CD8-positive, alpha-beta T cell (primary cell): ENCODE measurements at regions of chr5 and their contacts with region 1.

Region 1: DNA sequence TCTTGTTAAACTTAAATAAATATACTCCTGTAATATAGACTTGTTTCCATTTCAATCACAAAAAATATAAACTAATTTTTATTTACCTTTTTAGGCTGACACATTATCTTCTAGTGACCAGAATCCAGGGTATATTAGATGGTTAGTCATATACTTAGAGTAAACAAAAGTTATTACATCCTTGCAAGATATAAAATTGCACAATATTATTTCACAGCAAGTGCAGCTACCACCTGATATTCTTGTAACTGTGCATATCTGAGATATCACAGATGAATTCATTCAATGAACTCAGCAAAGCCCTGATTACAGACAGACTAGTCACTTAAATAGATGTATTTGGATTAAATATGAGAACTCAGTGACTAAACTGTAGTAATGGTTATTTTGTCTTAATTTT is 25.6 kb upstream of the ARRDC3 start:
- DNase-seq: no peak
- ATAC-seq: no peak
- H3K4me3 ChIP-seq: no peak overlapping the region
- H3K4me3 Mint-ChIP-seq: no peak overlapping the region
- H3K27ac ChIP-seq: no peak overlapping the region
- H3K27ac Mint-ChIP-seq: no peak overlapping the region
- H3K4me1 ChIP-seq: no peaks in the 10 kb centered on the region
- H3K4me1 Mint-ChIP-seq: no peaks in the 10 kb centered on the region
- H3K27me3 ChIP-seq: no peaks in the 10 kb centered on the region
- H3K27me3 Mint-ChIP-seq: no peaks in the 10 kb centered on the region
- CTCF ChIP-seq: no peak

Region 2: DNA sequence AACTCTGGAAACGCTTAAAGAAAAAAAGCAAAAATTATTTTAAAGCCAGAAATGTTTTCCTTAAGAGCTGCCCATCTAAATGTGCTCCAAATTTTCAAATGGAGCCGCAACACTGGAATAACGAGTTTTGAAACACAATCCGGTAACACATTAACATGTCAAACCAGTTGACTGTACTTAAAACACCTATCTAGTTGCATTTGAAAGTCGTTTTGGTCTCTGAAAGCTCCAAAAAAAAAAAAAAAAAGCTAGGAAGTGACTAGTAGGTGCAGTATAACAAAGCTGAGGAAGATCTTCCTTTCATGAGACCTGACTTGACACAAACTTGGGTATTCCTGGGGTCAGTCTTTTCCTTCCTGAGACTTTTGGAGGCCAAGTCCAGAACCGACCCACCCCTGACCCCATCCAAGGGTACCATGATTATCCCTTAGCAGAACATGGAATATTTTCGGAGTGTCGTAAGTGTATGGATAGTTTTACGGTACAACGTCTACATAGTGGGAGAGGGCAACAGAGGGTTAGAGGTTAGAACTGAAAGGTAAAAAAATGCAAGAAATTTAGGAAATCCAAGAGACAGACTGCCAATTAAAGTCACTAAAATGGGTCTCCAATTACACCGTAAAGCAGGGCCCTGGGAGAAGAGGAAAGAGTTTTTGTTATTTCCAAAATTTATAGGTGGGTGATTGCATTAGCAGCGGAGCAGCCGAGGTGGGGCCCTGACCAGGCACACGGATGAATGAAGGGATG is 1000.0 kb before region 1 on chr5:
- CTCF ChIA-PET with region 1: no interaction called
- POLR2A ChIA-PET with region 1: no interaction called
- intact Hi-C with region 1: no loop called
- DNase-seq: no peak
- ATAC-seq: no peak
- H3K4me3 ChIP-seq: peak overlapping the region; percentile 91 to 99
- H3K4me3 Mint-ChIP-seq: no peak overlapping the region
- H3K27ac ChIP-seq: peak overlapping the region; percentile 93 to 95
- H3K27ac Mint-ChIP-seq: no peak overlapping the region
- H3K4me1 ChIP-seq: peaks cover 7% of the 10 kb centered on the region
- H3K4me1 Mint-ChIP-seq: peaks cover 24% of the 10 kb centered on the region
- H3K27me3 ChIP-seq: no peaks in the 10 kb centered on the region
- H3K27me3 Mint-ChIP-seq: no peaks in the 10 kb centered on the region
- CTCF ChIP-seq: no peak

Region 3: DNA sequence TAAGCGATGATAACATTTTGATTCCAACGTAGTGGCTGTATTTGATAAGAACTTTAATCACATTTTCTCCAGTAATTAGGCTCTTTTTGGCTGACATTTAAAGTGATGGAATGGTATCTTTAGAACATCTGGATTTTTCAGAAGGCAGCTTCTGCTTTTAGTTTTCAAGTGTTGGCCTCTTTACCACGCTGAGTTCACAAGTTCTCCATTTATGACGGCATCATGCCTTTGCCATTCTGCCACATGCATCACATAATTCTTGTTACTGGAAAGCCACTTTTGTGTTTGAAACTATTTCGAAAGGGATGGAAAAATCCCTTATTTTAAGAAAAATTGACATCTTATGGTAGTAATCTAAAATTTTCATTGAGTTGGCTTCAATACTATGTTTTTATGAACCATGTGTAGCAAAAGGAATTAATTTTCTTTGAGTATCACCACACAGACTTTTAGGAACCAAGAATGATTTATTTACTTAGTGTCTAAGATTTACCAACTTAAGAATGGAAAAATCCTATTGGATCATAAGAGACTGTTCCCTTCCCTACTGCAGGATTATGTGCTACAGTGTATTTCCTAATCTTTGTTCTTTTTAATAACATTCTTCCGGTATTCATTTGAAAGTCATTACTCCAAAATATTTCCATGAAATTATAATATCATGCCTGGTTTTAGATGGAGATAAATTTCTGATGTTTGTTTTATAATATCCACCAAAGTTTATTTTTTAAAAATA is 505.9 kb before region 1 on chr5:
- CTCF ChIA-PET with region 1: no interaction called
- POLR2A ChIA-PET with region 1: no interaction called
- intact Hi-C with region 1: loop called in 1 of 2 experiments (anchors 1 kb)
- DNase-seq: no peak
- ATAC-seq: no peak
- H3K4me3 ChIP-seq: no peak overlapping the region
- H3K4me3 Mint-ChIP-seq: no peak overlapping the region
- H3K27ac ChIP-seq: no peak overlapping the region
- H3K27ac Mint-ChIP-seq: no peak overlapping the region
- H3K4me1 ChIP-seq: no peaks in the 10 kb centered on the region
- H3K4me1 Mint-ChIP-seq: no peaks in the 10 kb centered on the region
- H3K27me3 ChIP-seq: no peaks in the 10 kb centered on the region
- H3K27me3 Mint-ChIP-seq: no peaks in the 10 kb centered on the region
- CTCF ChIP-seq: no peak

Region 4: GRCh38 chr5:90949469-90950358 is 459.0 kb before region 1 on chr5:
- CTCF ChIA-PET with region 1: no interaction called
- POLR2A ChIA-PET with region 1: no interaction called
- intact Hi-C with region 1: loop called in 1 of 2 experiments (anchors 5 kb)
- DNase-seq: no peak
- ATAC-seq: no peak
- H3K4me3 ChIP-seq: no peak overlapping the region
- H3K4me3 Mint-ChIP-seq: no peak overlapping the region
- H3K27ac ChIP-seq: no peak overlapping the region
- H3K27ac Mint-ChIP-seq: no peak overlapping the region
- H3K4me1 ChIP-seq: no peaks in the 10 kb centered on the region
- H3K4me1 Mint-ChIP-seq: no peaks in the 10 kb centered on the region
- H3K27me3 ChIP-seq: no peaks in the 10 kb centered on the region
- H3K27me3 Mint-ChIP-seq: peaks cover 5% of the 10 kb centered on the region
- CTCF ChIP-seq: no peak

Region 5: GRCh38 chr5:91456928-91457680 is 48.4 kb after region 1 on chr5:
- CTCF ChIA-PET with region 1: no interaction called
- POLR2A ChIA-PET with region 1: no interaction called
- intact Hi-C with region 1: no loop called
- DNase-seq: no peak
- ATAC-seq: no peak
- H3K4me3 ChIP-seq: no peak overlapping the region
- H3K4me3 Mint-ChIP-seq: no peak overlapping the region
- H3K27ac ChIP-seq: no peak overlapping the region
- H3K27ac Mint-ChIP-seq: no peak overlapping the region
- H3K4me1 ChIP-seq: no peaks in the 10 kb centered on the region
- H3K4me1 Mint-ChIP-seq: peaks cover 3% of the 10 kb centered on the region
- H3K27me3 ChIP-seq: no peaks in the 10 kb centered on the region
- H3K27me3 Mint-ChIP-seq: peaks cover 2% of the 10 kb centered on the region
- CTCF ChIP-seq: no peak

Region 6: DNA sequence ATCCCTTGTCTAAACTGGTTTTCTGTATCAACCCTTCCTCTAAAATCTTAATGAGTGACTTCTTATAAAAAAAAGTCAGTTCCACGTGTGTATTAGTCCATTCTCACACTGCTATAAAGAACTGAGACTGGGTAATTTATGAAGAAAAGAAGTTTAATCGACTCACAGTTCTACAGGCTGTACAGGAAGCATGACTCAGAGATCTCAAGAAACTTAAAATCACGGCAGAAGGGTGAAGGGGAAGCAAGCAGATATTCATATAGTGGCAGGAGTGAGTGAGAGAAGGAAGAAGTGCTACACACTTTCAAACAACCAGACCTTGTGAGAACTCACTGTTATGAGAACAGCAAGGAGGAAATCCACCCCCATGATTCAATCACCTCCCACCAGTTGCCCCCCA is 282.2 kb after region 1 on chr5:
- CTCF ChIA-PET with region 1: no interaction called
- POLR2A ChIA-PET with region 1: no interaction called
- intact Hi-C with region 1: no loop called
- DNase-seq: no peak
- ATAC-seq: no peak
- H3K4me3 ChIP-seq: no peak overlapping the region
- H3K4me3 Mint-ChIP-seq: no peak overlapping the region
- H3K27ac ChIP-seq: no peak overlapping the region
- H3K27ac Mint-ChIP-seq: no peak overlapping the region
- H3K4me1 ChIP-seq: no peaks in the 10 kb centered on the region
- H3K4me1 Mint-ChIP-seq: no peaks in the 10 kb centered on the region
- H3K27me3 ChIP-seq: no peaks in the 10 kb centered on the region
- H3K27me3 Mint-ChIP-seq: no peaks in the 10 kb centered on the region
- CTCF ChIP-seq: no peak